Activated naive CD4-positive, alpha-beta T cell treated with anti-CD3 and anti-CD28 coated beads for 36 hours (primary cell): ENCODE measurements at regions of chr3 and their contacts with region 1.

Region 1: DNA sequence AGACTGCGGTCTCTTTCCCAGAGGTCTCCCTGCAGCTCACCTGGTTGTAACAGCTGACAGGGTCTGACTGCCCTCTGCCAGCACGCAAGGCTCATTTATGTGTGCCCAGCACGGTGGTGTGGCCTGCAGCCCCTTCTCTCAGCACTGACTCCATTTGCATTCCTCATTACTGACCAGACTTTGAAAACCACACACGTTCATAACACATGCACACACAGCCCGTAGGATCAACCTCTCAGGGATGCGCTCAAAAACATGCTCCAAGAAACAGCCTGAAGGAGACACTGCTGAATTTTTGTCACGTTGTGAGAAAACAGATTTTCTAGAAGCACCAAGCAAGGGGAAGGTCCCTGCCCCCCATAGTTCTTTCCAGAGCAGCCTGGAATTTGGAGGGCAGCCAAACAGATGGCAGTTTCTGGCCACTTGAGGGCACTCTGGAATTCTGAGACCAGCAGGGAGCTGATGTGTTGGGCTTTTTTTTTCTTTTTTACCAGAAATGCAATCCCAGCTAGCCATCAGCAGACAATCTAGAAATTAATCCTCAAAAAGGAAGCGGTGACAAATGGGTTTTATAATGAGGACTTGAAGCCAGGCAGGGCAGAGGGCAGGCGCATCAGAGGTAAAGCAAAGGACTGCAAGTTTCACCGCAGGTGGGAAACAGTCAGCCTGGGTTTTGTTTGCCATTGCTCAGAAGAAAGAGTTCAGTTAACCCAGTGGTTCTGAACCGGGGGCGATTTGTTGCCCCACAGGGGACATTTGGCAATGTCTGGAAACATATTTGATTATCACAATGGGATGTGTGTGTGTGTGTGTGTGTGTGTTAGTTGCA is 170.5 kb upstream of the PROK2 start:
- DNase-seq: peak; percentile 76
- H3K4me3 Mint-ChIP-seq: no peak overlapping the region
- H3K27ac Mint-ChIP-seq: peak overlapping the region; percentile 1
- H3K4me1 Mint-ChIP-seq: peaks cover 27% of the 10 kb centered on the region
- H3K27me3 Mint-ChIP-seq: no peaks in the 10 kb centered on the region

Region 2: GRCh38 chr3:71710906-71711494 is 244.5 kb before region 1 on chr3:
- CTCF ChIA-PET with region 1: no interaction called
- intact Hi-C with region 1: loop called (anchors 5 kb)
- DNase-seq: no peak
- H3K4me3 Mint-ChIP-seq: no peak overlapping the region
- H3K27ac Mint-ChIP-seq: no peak overlapping the region
- H3K4me1 Mint-ChIP-seq: peaks cover 50% of the 10 kb centered on the region
- H3K27me3 Mint-ChIP-seq: no peaks in the 10 kb centered on the region

Region 3: GRCh38 chr3:71984843-71985613 is 29.6 kb after region 1 on chr3:
- CTCF ChIA-PET with region 1: interaction called, 13 read pairs
- intact Hi-C with region 1: no loop called
- DNase-seq: peak; percentile 76
- H3K4me3 Mint-ChIP-seq: peak overlapping the region; percentile 48
- H3K27ac Mint-ChIP-seq: peak overlapping the region; percentile 84
- H3K4me1 Mint-ChIP-seq: peaks cover 43% of the 10 kb centered on the region
- H3K27me3 Mint-ChIP-seq: peaks cover 6% of the 10 kb centered on the region

Region 4: GRCh38 chr3:72021531-72021930 is 66.1 kb after region 1 on chr3:
- CTCF ChIA-PET with region 1: no interaction called
- intact Hi-C with region 1: no loop called
- DNase-seq: no peak
- H3K4me3 Mint-ChIP-seq: no peak overlapping the region
- H3K27ac Mint-ChIP-seq: no peak overlapping the region
- H3K4me1 Mint-ChIP-seq: no peaks in the 10 kb centered on the region
- H3K27me3 Mint-ChIP-seq: peaks cover 5% of the 10 kb centered on the region

Region 5: GRCh38 chr3:72100601-72101187 is 145.2 kb after region 1 on chr3:
- CTCF ChIA-PET with region 1: no interaction called
- intact Hi-C with region 1: loop called (anchors 2 kb)
- DNase-seq: peak; percentile 99
- H3K4me3 Mint-ChIP-seq: peak overlapping the region; percentile 79
- H3K27ac Mint-ChIP-seq: peak overlapping the region; percentile 89
- H3K4me1 Mint-ChIP-seq: peaks cover 26% of the 10 kb centered on the region
- H3K27me3 Mint-ChIP-seq: peaks cover 7% of the 10 kb centered on the region

Region 6: GRCh38 chr3:72347819-72348319 is 392.4 kb after region 1 on chr3:
- CTCF ChIA-PET with region 1: no interaction called
- intact Hi-C with region 1: loop called (anchors 10 kb)
- DNase-seq: peak; percentile 72
- H3K4me3 Mint-ChIP-seq: no peak overlapping the region
- H3K27ac Mint-ChIP-seq: no peak overlapping the region
- H3K4me1 Mint-ChIP-seq: peaks cover 55% of the 10 kb centered on the region
- H3K27me3 Mint-ChIP-seq: no peaks in the 10 kb centered on the region

Region 7: DNA sequence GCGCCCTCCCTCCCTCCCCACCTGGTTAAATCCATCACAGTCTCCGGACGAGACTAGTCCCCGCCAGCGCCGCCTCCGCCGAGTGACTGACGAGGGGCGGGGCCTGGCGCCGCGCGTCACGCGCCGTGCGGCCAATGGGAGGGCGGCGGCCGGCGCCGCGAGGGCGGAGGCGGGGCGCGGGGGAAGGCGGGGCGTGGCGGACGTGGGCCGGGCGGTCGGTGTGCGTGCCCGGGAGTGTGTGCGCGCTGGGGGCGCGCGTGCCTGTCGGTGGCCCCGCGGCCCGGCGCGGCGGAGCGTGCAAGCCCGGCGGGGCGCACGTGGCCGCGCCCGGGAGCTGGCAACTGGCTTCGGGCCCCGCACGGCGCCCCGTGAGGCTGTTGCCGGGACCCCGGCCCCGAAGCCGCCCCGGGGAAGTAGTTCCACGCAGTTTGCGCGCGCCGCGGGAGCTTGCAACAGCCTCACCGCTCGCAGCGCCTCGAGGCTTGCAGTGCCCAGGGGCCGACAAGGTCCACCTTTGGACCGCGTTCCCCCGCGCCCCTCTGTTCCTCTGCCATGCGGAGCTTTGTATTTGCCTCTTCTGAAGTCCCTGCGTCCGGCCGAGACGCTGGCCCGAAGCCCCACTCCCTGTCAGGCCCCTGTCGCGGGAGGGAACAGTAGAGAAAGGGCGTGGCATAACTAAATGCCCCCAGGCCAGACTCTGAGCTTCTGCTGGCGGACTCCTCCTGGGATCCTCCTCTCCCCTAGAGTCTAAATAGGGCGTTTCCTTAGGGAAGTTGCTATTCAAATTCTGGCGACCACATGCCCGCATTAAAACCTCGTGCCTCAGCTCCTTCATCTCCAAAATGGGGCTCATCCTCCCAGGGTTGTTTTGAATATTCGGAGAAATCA is 491.8 kb after region 1 on chr3:
- CTCF ChIA-PET with region 1: no interaction called
- intact Hi-C with region 1: loop called (anchors 5 kb)
- DNase-seq: peak; percentile 88
- H3K4me3 Mint-ChIP-seq: peak overlapping the region; percentile 54
- H3K27ac Mint-ChIP-seq: no peak overlapping the region
- H3K4me1 Mint-ChIP-seq: peaks cover 37% of the 10 kb centered on the region
- H3K27me3 Mint-ChIP-seq: peaks cover 12% of the 10 kb centered on the region

Region 8: DNA sequence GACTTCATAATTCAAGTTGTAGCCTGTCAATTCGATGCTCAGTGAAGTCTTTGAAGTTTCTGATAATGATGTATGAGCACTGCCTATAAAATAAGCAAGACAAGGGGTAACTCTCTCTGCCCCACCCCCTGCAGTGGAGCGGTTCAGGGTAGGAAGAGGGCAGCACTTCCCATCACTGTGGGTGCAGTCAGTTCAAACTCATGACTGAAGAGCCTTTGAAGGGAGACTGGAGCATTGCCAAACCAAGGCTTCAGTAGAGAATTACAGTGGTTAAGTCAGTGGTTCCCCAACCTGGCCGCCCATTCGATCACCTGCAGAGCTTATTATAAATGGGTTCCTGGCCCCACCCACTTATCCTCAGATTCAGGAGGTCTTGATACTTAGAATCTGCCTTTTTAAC is 702.2 kb after region 1 on chr3:
- CTCF ChIA-PET with region 1: no interaction called
- intact Hi-C with region 1: loop called (anchors 5 kb)
- DNase-seq: peak; percentile 83
- H3K4me3 Mint-ChIP-seq: no peak overlapping the region
- H3K27ac Mint-ChIP-seq: no peak overlapping the region
- H3K4me1 Mint-ChIP-seq: peaks cover 23% of the 10 kb centered on the region
- H3K27me3 Mint-ChIP-seq: peaks cover 13% of the 10 kb centered on the region